HCT116 (cell line): ENCODE measurements at regions of chr11 and their contacts with region 1.

Region 1: DNA sequence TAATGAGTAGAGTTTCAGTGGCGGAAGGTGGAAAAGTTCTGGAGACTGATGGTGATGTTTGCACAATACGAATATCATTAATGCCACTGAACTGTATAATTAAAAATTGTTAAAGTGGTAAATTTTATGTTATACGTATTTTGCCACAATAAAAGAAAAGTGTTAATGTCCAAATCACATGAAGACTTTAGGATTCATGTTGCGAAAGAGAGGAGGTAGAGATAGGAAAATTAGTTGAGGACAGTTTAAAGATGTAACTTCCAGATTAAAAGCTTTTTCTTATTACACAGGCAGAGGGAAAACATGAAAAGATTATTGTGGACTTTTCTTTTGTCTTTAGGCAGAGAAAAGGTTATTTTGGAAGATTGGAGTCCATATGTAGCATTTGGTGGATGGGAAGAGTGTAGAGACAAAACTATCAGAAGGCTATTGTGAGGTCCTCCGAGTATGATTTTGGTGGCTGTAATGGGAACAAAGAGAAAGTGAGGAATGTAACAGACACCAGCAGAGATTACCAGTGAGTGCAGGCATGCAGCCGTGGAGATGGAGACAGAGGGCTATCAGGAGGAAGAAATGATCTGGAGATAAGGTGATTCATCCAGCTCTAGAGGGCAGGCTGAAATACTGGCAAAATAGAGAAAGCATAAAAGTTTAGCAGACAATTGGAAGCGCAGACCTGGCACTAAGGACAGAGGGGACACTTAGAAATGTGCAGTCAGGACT is 12.5 kb downstream of the VPS26B start:
- DNase-seq: no peak
- ATAC-seq: no peak
- H3K4me3 ChIP-seq: no peak overlapping the region
- H3K27ac ChIP-seq: no peak overlapping the region
- H3K4me1 ChIP-seq: no peaks in the 10 kb centered on the region
- H3K27me3 ChIP-seq: no peaks in the 10 kb centered on the region
- CTCF ChIP-seq: no peak
- POLR2A ChIP-seq: no peak
- RAD21 ChIP-seq: no peak

Region 2: DNA sequence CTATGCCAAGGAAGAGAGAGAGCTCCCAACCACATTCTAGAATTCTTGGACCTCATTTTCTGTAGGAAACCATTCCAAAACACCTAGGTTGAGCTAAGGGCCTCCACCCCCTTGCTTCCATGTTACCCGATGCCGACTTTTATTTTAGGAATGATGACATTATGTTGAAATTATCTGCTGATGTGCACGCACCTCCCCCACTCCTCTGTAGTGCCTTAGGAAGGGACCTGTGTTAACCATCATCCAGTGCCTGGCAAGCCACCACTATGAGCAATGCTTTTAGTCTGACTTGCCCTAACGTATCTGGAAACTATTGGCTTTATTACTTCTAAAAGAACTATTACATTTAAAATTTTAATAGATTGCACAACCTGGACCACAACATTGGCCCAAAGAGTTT is 55.3 kb before region 1 on chr11:
- CTCF ChIA-PET with region 1: no interaction called
- POLR2A ChIA-PET with region 1: no interaction called
- RAD21 ChIA-PET with region 1: no interaction called
- intact Hi-C with region 1: loop called (anchors 5 kb)
- DNase-seq: no peak
- ATAC-seq: no peak
- H3K4me3 ChIP-seq: no peak overlapping the region
- H3K27ac ChIP-seq: no peak overlapping the region
- H3K4me1 ChIP-seq: no peaks in the 10 kb centered on the region
- H3K27me3 ChIP-seq: no peaks in the 10 kb centered on the region
- CTCF ChIP-seq: no peak
- POLR2A ChIP-seq: no peak
- RAD21 ChIP-seq: no peak

Region 3: DNA sequence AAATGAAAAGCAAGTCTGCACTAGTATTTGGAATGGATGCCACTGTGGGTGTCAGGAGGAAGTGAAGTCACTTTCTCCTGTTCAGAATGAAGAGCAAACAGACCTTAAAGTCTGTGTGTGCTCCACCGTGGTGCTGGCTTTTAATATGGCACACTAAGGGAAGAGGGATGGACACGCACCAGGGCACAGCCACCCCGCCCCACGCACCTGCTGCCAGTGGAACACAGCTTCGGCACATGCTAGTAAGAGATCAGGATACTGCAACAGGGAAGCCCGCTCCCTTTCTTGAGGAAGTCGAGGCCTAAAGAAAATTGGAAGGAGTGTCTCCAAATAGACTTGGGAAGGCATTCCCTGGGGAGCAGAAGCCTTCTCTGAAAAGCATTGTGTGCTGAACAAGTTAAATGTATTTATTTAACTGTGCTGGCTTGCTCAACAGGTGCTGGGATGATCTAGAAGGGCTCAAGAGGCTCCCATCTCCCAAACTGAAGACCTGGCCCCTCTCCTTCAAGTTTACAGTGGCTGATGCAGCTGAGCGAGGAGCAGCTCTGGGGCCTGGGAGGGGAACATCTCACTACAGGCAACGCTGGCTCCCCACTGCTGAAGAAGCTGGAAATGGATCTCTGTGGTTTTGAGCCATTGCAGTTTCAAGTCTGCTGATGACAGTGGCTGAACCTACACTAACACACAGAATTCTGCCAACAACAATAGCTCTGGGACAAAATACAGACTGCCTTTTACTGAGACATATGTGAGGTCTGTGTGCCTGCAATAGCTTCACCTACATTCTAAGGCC is 679.6 kb after region 1 on chr11:
- CTCF ChIA-PET with region 1: no interaction called
- POLR2A ChIA-PET with region 1: no interaction called
- RAD21 ChIA-PET with region 1: no interaction called
- intact Hi-C with region 1: no loop called
- DNase-seq: no peak
- ATAC-seq: no peak
- H3K4me3 ChIP-seq: no peak overlapping the region
- H3K27ac ChIP-seq: no peak overlapping the region
- H3K4me1 ChIP-seq: no peaks in the 10 kb centered on the region
- H3K27me3 ChIP-seq: peaks cover 64% of the 10 kb centered on the region
- CTCF ChIP-seq: no peak
- POLR2A ChIP-seq: no peak
- RAD21 ChIP-seq: no peak